CD4-positive, alpha-beta T cell (primary cell): ENCODE measurements at regions of chr21 and their contacts with region 1.

Region 1: GRCh38 chr21:42233067-42233961 is 14.4 kb downstream of the ABCG1 start:
- DNase-seq: peak; percentile 41 to 95 (median 74)
- ATAC-seq: peak; percentile 47
- H3K4me3 ChIP-seq: peak overlapping the region; percentile 57
- H3K4me3 Mint-ChIP-seq: peak overlapping the region; percentile 85
- H3K27ac ChIP-seq: peak overlapping the region; percentile 94
- H3K27ac Mint-ChIP-seq: peak overlapping the region; percentile 90
- H3K4me1 ChIP-seq: peaks cover 91% of the 10 kb centered on the region
- H3K4me1 Mint-ChIP-seq: peaks cover 97% of the 10 kb centered on the region
- H3K27me3 ChIP-seq: no peaks in the 10 kb centered on the region
- H3K27me3 Mint-ChIP-seq: no peaks in the 10 kb centered on the region
- CTCF ChIP-seq: peak; percentile 14

Region 2: GRCh38 chr21:41879190-41879998 is 353.9 kb before region 1 on chr21 and contains the start of gene PRDM15:
- CTCF ChIA-PET with region 1: no interaction called
- POLR2A ChIA-PET with region 1: no interaction called
- intact Hi-C with region 1: loop called in 1 of 2 experiments (anchors 5 kb)
- DNase-seq: peak; percentile 62 to 86 (median 76)
- ATAC-seq: peak; percentile 71
- H3K4me3 ChIP-seq: peak within 1 kb of the TSS; percentile 73
- H3K4me3 Mint-ChIP-seq: peak within 1 kb of the TSS; percentile 97
- H3K27ac ChIP-seq: peak within 1 kb of the TSS; percentile 47 to 70
- H3K27ac Mint-ChIP-seq: peak within 1 kb of the TSS; percentile 93
- H3K4me1 ChIP-seq: peaks cover 32% of the 10 kb centered on the region
- H3K4me1 Mint-ChIP-seq: peaks cover 37% of the 10 kb centered on the region
- H3K27me3 ChIP-seq: no peaks in the 10 kb centered on the region
- H3K27me3 Mint-ChIP-seq: no peaks in the 10 kb centered on the region
- CTCF ChIP-seq: no peak
- total RNA-seq, gene PRDM15: 10.4 to 12.0 TPM

Region 3: GRCh38 chr21:42164064-42164789 is 69.1 kb before region 1 on chr21:
- CTCF ChIA-PET with region 1: interaction called, 4 read pairs
- POLR2A ChIA-PET with region 1: interaction called, 3 read pairs
- intact Hi-C with region 1: loop called in 1 of 2 experiments (anchors 5 kb)
- DNase-seq: peak; percentile 22 to 78 (median 50)
- ATAC-seq: peak; percentile 34
- H3K4me3 ChIP-seq: no peak overlapping the region
- H3K4me3 Mint-ChIP-seq: no peak overlapping the region
- H3K27ac ChIP-seq: no peak overlapping the region
- H3K27ac Mint-ChIP-seq: peak overlapping the region; percentile 56
- H3K4me1 ChIP-seq: peaks cover 31% of the 10 kb centered on the region
- H3K4me1 Mint-ChIP-seq: peaks cover 56% of the 10 kb centered on the region
- H3K27me3 ChIP-seq: no peaks in the 10 kb centered on the region
- H3K27me3 Mint-ChIP-seq: no peaks in the 10 kb centered on the region
- CTCF ChIP-seq: peak; percentile 62

Region 4: GRCh38 chr21:42199488-42200458 is 33.5 kb before region 1 on chr21:
- CTCF ChIA-PET with region 1: no interaction called
- POLR2A ChIA-PET with region 1: interaction called, 4 read pairs
- intact Hi-C with region 1: loop called in 1 of 2 experiments (anchors 2 kb)
- DNase-seq: peak in 5 of 14 experiments; percentile 30 to 77 (median 71)
- ATAC-seq: peak; percentile 84
- H3K4me3 ChIP-seq: no peak overlapping the region
- H3K4me3 Mint-ChIP-seq: peak overlapping the region; percentile 31
- H3K27ac ChIP-seq: peak overlapping the region in 1 of 2 donors; percentile 64
- H3K27ac Mint-ChIP-seq: peak overlapping the region; percentile 94
- H3K4me1 ChIP-seq: peaks cover 33% of the 10 kb centered on the region
- H3K4me1 Mint-ChIP-seq: peaks cover 71% of the 10 kb centered on the region
- H3K27me3 ChIP-seq: no peaks in the 10 kb centered on the region
- H3K27me3 Mint-ChIP-seq: no peaks in the 10 kb centered on the region
- CTCF ChIP-seq: no peak

Region 5: DNA sequence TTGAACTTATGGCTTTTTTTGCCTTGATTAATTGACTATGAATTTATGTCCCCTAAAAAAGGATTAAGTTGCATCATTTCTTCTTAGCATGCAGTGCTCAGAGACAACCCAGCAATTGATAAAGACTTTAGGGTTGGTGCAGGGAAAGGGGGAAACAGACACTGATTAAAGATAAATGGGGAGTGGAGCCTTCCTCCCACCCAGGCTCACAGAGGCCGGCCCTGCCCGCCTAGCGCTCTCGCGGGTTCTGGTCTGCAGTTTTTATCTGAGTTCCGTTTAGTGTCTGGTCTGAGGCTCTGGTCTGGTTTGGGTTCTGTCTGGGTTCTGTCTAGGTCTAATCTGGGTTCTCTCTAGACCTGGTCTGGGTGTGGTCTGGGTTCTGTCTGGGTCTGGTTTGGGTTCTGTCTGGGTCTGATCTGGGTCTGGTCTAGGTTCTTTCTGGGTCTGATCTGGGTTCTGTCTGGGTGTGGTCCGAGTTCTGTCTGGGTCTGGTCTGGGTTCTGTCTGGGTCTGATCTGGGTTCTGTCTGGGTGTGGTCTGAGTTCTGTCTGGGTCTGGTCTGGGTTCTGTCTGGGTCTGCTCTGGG is 33.8 kb after region 1 on chr21:
- CTCF ChIA-PET with region 1: no interaction called
- POLR2A ChIA-PET with region 1: no interaction called
- intact Hi-C with region 1: loop called in 1 of 2 experiments (anchors 5 kb)
- DNase-seq: peak in 2 of 14 experiments; percentile 10 to 55
- ATAC-seq: peak; percentile 7
- H3K4me3 ChIP-seq: no peak overlapping the region
- H3K4me3 Mint-ChIP-seq: peak overlapping the region; percentile 73
- H3K27ac ChIP-seq: no peak overlapping the region
- H3K27ac Mint-ChIP-seq: peak overlapping the region; percentile 85
- H3K4me1 ChIP-seq: peaks cover 35% of the 10 kb centered on the region
- H3K4me1 Mint-ChIP-seq: peaks cover 60% of the 10 kb centered on the region
- H3K27me3 ChIP-seq: no peaks in the 10 kb centered on the region
- H3K27me3 Mint-ChIP-seq: no peaks in the 10 kb centered on the region
- CTCF ChIP-seq: no peak

Region 6: DNA sequence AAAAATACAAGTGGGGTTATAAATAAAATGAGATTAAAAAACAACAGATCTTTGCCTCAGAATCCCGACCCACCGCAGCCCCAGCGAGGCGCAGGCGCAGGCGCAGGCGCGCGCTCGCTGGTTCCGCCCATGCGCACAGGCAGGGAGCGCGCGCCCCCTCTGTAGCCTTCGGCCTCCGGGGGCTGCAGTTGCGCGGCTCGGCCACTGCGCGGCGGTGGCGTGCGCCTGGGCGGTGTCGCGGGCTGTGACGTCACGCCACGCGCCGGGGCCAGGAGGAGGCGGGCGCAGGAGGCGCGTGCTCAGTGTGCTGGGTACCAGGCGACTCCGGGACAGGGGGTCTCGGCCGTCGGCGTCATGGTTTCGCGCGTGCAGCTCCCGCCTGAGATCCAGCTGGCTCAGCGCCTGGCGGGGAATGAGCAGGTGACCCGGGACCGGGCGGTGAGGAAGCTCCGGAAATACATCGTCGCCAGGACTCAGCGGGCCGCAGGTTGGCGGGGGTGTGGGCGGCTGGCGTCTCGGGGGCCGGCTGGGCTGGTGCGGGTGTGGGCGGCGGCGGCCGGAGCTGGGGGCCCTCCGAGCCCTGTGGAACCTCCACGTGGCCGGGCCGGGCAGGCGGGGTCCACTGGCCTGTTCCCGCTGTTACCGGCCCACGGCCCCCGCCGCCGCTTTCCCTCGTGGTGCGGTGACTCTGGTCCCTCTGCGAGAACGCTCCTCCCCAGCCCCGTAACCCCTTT is 1556.1 kb after region 1 on chr21 and contains the start of gene RRP1:
- CTCF ChIA-PET with region 1: no interaction called
- POLR2A ChIA-PET with region 1: no interaction called
- intact Hi-C with region 1: loop called in 1 of 2 experiments (anchors 10 kb)
- DNase-seq: peak; percentile 85 to 98 (median 94)
- ATAC-seq: peak; percentile 93
- H3K4me3 ChIP-seq: peak within 1 kb of the TSS; percentile 76
- H3K4me3 Mint-ChIP-seq: peak within 1 kb of the TSS; percentile 95
- H3K27ac ChIP-seq: peak within 1 kb of the TSS; percentile 44 to 55
- H3K27ac Mint-ChIP-seq: peak within 1 kb of the TSS; percentile 84
- H3K4me1 ChIP-seq: peaks cover 27% of the 10 kb centered on the region
- H3K4me1 Mint-ChIP-seq: peaks cover 18% of the 10 kb centered on the region
- H3K27me3 ChIP-seq: no peaks in the 10 kb centered on the region
- H3K27me3 Mint-ChIP-seq: no peaks in the 10 kb centered on the region
- CTCF ChIP-seq: peak; percentile 92
- total RNA-seq, gene RRP1: 27.7 to 29.0 TPM